Transverse colon (tissue), 4 donors: ENCODE measurements at regions of chrX and their contacts with region 1.

Region 1: GRCh38 chrX:54808605-54809483 is 1.3 kb downstream of the MAGED2 start:
- DNase-seq: peak; percentile 94
- H3K4me3 ChIP-seq: peak overlapping the region; percentile 54 to 84 (median 78)
- H3K27ac ChIP-seq: peak overlapping the region; percentile 84 to 93 (median 86)
- H3K4me1 ChIP-seq: peaks cover 3 to 12% (median 8%) of the 10 kb centered on the region in 4 donors
- H3K27me3 ChIP-seq: no peaks in the 10 kb centered on the region
- CTCF ChIP-seq: no peak
- EP300 ChIP-seq: no peak
- POLR2A ChIP-seq: no peak

Region 2: GRCh38 chrX:53511322-53511721 is 1297.5 kb before region 1 on chrX:
- in situ Hi-C with region 1: no loop called
- intact Hi-C with region 1: no loop called
- DNase-seq: no peak
- H3K4me3 ChIP-seq: no peak overlapping the region
- H3K27ac ChIP-seq: no peak overlapping the region
- H3K4me1 ChIP-seq: no peaks in the 10 kb centered on the region
- H3K27me3 ChIP-seq: no peaks in the 10 kb centered on the region
- CTCF ChIP-seq: no peak
- EP300 ChIP-seq: no peak
- POLR2A ChIP-seq: no peak

Region 3: DNA sequence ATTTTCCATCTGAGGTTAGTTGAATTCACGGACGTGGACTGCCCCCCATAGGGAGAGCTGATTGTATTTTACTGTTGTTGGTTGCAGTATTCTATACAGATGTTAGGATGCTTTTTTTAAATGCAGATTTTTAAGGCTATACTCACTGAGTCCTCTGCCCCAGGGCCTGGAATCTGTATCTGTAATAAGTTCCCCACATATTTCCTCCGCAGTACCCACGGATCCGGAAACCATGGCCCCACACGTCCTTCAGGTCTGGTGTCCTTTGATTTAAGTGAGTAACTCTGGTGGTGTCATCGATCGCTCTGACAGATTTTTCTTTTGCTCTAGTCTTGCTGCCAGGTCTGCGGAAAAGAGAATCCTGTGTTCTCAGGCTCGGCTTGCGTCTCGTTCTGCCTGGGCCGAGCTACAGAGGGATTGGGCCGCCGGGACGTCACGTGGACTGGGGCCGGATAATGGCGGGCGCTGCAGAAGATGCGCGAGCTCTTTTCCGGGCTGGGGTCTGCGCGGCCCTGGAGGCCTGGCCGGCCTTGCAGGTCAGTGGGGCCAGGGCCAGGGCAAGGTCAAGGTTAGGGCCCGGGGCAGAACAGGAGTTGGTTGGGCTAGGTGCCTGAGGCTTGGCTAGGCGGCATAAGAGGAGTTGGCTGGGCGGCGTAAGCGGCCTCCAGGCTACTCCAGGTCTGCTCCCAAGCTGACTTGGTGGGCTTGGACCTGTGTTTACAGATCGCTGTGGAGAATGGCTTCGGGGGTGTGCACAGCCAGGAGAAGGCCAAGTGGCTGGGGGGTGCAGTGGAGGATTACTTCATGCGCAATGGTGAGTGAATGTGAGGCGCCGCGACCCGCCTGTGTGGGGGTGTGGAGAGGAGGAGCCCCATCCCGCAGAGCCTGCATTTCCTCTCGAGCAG is 368.6 kb before region 1 on chrX and contains the start of gene TSR2:
- in situ Hi-C with region 1: loop called in 1 of 4 experiments (anchors 25 kb)
- intact Hi-C with region 1: no loop called
- DNase-seq: peak; percentile 83
- H3K4me3 ChIP-seq: peak within 1 kb of the TSS; percentile 57 to 90 (median 77)
- H3K27ac ChIP-seq: peak within 1 kb of the TSS; percentile 57 to 81 (median 72)
- H3K4me1 ChIP-seq: peaks cover 0 to 12% (median 3%) of the 10 kb centered on the region in 4 donors
- H3K27me3 ChIP-seq: no peaks in the 10 kb centered on the region
- CTCF ChIP-seq: no peak
- EP300 ChIP-seq: no peak
- POLR2A ChIP-seq: peak; percentile 58
- total RNA-seq, gene TSR2: 7.6 to 18.1 (median 17.9) TPM